Right ventricle myocardium inferior (tissue), 1 donor: ENCODE measurements at regions of chr20 and their contacts with region 1.

Region 1: DNA sequence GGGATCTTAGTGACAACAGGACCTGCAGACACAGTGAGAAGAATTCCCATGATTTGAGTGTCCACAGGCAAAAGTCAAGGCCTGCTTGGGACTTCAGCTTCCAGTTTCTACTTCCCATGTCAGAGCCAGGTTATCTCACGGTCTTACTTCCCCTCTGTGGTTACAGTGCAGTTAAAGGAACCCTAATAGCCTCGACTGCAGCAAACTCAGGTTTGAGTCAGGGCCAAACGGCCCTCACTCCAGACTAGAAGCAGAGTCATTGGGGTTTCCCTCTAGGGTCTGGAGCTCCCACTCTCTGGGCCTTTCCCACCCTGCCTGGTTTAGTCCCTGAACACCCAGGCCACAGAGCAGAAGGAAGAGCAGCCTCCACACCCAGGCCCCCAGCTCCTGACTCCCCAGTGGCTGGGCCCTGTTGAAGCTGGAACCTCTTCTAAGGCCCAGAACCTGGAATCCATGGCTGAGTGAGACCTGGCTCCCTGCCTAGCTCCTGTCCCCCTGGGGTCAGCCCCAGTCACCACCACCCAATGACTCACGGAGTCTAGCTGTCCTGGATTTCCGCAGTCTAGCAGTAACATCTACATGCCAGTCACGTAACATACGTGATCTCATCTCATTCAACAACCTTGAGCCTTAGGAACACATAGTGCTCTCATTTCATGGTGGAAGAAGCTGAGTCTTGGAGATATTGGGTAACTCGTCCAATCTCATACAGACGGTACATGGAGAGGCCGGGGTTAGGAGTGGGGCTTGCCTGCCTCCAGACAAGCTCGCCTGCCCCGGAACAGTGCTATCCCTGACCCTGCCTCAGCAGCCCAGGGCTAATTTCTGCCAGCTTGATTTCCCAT is 9.2 kb upstream of the GHRH start:
- DNase-seq: no peak
- ATAC-seq: peak; percentile 45

Region 2: GRCh38 chr20:37194621-37195417 is 76.0 kb before region 1 on chr20:
- intact Hi-C with region 1: loop called (anchors 2 kb)
- DNase-seq: no peak
- ATAC-seq: no peak

Region 3: DNA sequence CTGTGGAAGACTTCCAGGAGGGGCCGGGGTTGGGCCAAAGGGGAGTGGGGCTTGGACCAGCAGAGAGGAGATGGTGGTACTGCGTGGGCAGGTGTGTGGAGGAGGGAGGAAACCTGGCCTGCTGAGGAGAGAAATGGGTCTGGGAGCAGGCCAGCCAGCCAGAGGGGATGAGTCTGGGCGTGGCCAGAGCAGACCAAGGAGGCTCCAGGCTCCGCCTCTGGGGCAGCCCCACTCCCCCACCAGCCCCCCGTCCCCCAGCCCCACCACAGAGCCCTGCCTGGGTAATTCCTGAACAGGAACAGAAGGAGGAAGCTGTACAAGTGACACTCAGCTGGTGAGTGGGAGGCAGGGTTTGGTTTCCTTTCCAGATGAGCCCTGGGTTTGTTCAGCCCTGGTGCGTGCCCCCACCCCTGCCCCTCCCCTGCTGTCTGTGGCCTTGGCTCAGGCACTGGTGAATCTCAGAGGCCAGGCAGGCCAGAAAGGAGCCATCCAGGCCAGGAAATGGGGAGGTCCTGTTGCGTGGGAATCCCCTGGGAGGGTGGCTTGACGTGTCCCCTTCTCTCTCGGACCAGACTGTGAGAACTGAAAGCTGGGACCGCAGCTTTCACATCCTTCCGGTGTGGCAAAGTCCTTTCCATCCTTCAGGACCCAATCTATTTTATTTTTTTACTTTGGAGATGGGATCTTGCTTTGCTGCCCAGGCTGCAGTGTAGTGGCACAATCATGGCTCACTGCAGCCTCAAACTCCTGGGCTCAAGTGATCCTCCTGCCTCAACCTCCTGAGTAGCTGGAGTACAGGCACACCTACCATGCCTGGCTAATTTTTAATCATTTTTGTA is 65.8 kb after region 1 on chr20:
- intact Hi-C with region 1: no loop called
- DNase-seq: no peak
- ATAC-seq: peak; percentile 69

Region 4: DNA sequence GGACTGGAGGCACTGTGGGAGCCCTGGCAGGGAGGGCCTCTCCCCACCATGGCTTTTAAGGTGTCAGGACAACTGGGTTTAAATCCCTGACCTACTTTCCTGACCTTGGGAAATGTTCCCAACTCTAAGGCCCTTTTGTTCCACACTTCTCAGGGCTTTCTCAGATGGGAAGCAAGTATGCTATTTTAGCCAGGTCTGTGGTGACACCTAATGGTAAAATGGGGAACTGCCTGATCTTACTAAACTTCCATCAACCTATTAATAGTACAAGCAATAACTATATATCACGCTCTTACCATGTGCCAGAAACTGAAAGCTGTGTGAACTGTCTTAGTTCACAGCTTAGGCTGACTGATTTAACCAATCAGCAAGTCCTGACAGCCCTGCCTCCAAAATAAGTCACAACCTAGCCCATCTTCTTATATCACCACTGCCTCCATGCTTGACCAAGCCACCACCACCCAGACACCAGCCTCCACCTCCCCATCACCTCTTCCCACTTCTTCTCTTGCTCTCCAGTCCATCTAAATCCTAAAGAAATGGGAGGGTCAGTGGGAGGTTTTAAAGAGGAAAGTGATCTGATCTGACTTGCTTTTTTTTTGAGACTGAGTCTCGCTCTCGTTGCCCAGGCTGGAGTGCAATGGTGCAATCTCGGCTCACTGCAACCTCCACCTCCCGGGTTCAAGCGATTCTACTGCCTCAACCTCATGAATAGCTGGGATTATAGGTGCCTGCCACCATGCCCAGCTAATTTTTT is 263.8 kb after region 1 on chr20:
- intact Hi-C with region 1: loop called (anchors 1 kb)
- DNase-seq: no peak
- ATAC-seq: peak; percentile 84

Region 5: DNA sequence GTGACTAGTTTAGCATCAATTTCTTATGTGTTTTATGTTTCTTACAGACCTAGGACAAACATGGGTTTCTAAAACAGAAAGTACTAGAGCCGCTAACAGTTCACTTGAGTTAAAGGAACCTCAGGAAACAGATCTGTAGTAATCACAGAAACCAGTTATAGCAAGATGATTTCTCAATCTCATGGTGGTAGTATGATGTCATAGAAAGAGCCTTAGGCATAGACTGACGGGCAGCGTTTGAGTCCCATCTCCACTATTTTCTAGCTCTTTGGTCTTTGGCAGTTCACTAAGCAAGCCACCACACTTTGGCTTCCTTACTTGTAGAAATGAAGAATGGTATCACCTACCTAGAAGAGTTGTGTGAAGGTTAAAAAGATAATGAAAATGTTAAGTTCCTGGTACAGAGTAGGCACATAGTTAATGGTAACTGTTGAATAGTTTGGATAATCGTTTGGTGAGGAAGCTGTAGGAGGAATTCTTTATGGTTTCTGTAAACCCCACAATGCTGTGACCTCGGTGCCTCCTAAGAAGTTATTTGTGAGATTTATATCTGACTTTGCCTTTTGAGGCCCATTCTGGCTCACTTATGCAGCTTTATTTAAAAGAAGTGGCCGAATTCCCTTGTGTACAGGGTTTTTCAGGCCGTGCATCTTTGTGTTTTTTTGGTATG is 444.3 kb after region 1 on chr20:
- intact Hi-C with region 1: no loop called
- DNase-seq: no peak
- ATAC-seq: no peak